Left colon (tissue), 2 donors: ENCODE measurements at regions of chr6 and their contacts with region 1.

Region 1: DNA sequence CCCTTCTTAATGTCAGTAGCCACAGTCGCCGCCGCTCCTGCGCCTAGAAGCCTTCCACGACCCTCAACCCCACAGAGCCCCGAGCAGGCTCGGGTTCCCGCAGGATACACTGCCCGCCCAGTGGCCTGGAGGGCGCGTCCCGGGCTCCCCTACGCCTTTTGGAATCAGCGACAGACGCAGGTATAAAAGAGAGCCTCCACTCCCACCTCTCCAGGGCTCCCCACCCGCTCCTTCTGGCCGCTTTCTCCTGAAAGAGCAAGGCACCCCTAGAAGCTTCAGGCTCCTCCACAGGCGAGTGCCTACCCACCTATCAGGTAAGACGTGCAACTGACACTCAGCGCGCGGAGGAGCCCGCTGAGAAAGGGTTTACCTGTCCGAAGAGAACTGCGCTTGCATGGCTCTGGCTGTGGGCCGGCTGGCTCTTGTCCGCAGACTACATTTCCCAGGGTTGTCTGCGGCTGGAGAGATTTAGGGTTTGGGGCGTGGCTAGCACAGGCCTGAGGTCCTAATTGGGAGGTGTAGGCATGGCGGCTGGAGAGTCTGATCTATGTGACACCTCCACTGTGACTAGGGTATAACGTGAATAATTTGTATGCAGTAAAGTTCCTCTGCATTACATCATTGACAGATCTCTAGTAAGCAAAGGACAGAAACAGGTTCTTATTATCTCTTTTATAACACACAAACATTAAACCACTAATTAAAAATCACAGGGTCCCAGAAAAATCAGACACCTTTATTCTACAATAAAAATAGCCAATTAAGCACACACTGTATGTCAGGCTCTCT is 13.5 kb upstream of the ZNF391 start:
- DNase-seq: peak; percentile 82 to 84
- ATAC-seq: peak; percentile 96

Region 2: GRCh38 chr6:27441001-27441400 is 66.0 kb after region 1 on chr6:
- intact Hi-C with region 1: no loop called
- DNase-seq: no peak
- ATAC-seq: no peak

Region 3: GRCh38 chr6:27472617-27473400 is 97.8 kb after region 1 on chr6 and contains the start of gene ZNF184:
- intact Hi-C with region 1: loop called in 1 of 2 experiments (anchors 10 kb)
- DNase-seq: peak; percentile 97 to 98
- ATAC-seq: peak; percentile 92
- total RNA-seq, gene ZNF184: 5.8 to 6.5 TPM